Ascending aorta (tissue), 2 donors: ENCODE measurements at regions of chr20 and their contacts with region 1.

Region 1: DNA sequence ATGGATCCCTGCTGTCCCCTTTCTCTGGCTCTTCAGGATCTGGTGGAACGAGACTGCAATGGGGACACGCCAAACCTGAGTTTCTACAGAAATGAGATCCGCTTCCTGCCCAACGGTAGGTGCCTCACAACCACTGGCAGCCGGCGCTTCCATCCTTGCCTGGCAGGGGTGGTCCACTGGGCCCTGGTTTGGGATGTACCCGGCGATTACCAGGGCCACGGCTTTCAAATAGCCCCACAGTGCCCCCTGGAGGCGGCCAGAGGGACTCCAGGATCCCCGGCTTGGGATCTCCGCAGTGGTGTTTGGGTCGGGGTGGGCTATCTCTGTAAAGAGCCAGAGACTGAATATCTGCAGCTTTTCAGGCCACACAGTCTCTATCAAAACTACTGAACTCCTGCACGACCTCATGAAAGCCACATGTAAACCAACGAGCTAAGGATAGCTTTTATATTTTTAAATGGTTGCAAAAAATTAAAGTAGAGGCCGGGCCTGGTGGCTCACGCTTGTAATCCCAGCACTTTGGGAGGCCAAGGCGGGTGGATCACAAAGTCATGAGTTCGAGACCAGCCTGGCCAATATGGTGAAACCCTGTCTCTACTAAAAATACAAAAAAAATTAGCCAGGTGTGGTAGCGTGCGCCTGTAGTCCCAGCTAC is 3.7 kb downstream of the OGFR start:
- DNase-seq: peak in 1 of 2 donors; percentile 84
- H3K4me3 ChIP-seq: no peak overlapping the region
- H3K27ac ChIP-seq: no peak overlapping the region
- H3K4me1 ChIP-seq: peaks cover 16 to 35% of the 10 kb centered on the region in 2 donors
- H3K27me3 ChIP-seq: no peaks in the 10 kb centered on the region
- CTCF ChIP-seq: peak; percentile 87 to 94 (median 90)

Region 2: GRCh38 chr20:62652051-62652926 is 156.0 kb before region 1 on chr20:
- intact Hi-C with region 1: loop called (anchors 5 kb)
- DNase-seq: peak; percentile 88 to 96
- H3K4me3 ChIP-seq: peak overlapping the region; percentile 25 to 45
- H3K27ac ChIP-seq: peak overlapping the region; percentile 89 to 91
- H3K4me1 ChIP-seq: peaks cover 4 to 14% of the 10 kb centered on the region in 2 donors
- H3K27me3 ChIP-seq: no peaks in the 10 kb centered on the region
- CTCF ChIP-seq: no peak

Region 3: GRCh38 chr20:62668441-62669027 is 139.8 kb before region 1 on chr20:
- intact Hi-C with region 1: loop called (anchors 1 kb)
- DNase-seq: peak in 1 of 2 donors; percentile 78
- H3K4me3 ChIP-seq: no peak overlapping the region
- H3K27ac ChIP-seq: no peak overlapping the region
- H3K4me1 ChIP-seq: no peaks in the 10 kb centered on the region
- H3K27me3 ChIP-seq: no peaks in the 10 kb centered on the region
- CTCF ChIP-seq: peak; percentile 46 to 75 (median 68)

Region 4: GRCh38 chr20:62752671-62753501 is 55.5 kb before region 1 on chr20:
- intact Hi-C with region 1: no loop called
- DNase-seq: no peak
- H3K4me3 ChIP-seq: no peak overlapping the region
- H3K27ac ChIP-seq: no peak overlapping the region
- H3K4me1 ChIP-seq: no peaks in the 10 kb centered on the region
- H3K27me3 ChIP-seq: no peaks in the 10 kb centered on the region
- CTCF ChIP-seq: no peak